Head of caudate nucleus (tissue), 42 donors: ENCODE measurements at regions of chr9 and their contacts with region 1.

Region 1: DNA sequence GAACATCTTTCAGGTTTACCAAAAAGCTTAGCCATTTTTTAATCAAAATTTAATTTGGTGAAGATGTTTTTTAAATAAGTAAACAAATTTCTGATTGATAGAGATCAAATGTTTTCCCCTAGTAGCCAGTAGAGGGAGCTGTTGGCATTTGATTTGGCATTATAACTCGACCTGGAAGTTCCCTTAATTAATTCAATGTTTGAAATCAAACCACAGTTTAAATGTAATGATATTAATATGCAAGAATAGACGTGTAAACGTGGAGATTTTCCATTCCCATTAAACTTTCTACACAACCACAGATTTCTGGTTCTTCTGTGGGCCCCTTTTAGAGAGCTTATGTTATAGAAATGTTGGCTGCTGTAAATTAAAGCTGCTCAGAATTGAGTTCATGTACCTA is 148.1 kb upstream of the MPDZ start:
- DNase-seq: peak in 11 of 42 donors; percentile 14 to 75 (median 49)

Region 2: GRCh38 chr9:13688994-13689600 is 261.5 kb after region 1 on chr9:
- intact Hi-C with region 1: loop called (anchors 10 kb)
- DNase-seq: peak in 32 of 42 donors; percentile 10 to 77 (median 46)

Region 3: DNA sequence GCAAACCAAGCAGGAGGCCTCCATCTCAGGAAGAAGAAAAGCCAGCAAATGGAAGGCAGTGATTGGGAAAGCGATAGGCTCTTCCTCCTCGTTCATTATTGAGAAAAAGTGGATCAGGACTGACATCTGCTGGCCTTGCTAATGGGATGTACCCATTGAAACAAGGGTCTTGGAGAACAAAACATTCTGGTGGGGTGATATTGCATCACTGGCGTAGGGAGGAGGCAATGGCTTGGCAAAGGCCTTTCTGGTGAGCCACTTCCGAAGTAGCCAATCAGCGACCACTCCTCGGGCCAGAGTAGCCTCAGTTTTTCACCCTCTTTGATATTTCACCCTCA is 973.0 kb after region 1 on chr9:
- intact Hi-C with region 1: loop called (anchors 2 kb)
- DNase-seq: peak in 40 of 42 donors; percentile 10 to 91 (median 71)

Region 4: DNA sequence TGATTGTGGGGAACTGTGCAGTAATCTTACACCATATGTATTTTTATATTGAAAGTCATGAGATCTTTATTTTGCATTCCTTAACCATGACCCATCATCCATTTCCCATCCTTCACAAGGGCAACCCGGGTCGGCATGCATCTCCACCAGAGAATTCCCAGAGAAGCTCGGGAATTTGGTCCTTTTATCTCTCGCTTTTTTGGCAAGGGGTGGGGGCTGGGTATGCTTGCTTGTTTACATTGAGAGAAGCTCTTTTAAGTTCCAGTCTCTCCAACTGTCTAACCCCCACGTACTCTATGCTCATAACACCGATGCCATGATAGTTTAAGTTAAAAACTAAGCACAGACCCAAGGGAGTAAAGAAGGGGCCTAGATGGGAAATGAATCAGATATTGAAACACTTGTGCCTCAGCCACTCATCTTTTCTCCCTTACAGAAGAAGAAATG is 996.3 kb after region 1 on chr9:
- intact Hi-C with region 1: loop called (anchors 5 kb)
- DNase-seq: no peak